Naive thymus-derived CD4-positive, alpha-beta T cell (primary cell): ENCODE measurements at regions of chr20 and their contacts with region 1.

Region 1: DNA sequence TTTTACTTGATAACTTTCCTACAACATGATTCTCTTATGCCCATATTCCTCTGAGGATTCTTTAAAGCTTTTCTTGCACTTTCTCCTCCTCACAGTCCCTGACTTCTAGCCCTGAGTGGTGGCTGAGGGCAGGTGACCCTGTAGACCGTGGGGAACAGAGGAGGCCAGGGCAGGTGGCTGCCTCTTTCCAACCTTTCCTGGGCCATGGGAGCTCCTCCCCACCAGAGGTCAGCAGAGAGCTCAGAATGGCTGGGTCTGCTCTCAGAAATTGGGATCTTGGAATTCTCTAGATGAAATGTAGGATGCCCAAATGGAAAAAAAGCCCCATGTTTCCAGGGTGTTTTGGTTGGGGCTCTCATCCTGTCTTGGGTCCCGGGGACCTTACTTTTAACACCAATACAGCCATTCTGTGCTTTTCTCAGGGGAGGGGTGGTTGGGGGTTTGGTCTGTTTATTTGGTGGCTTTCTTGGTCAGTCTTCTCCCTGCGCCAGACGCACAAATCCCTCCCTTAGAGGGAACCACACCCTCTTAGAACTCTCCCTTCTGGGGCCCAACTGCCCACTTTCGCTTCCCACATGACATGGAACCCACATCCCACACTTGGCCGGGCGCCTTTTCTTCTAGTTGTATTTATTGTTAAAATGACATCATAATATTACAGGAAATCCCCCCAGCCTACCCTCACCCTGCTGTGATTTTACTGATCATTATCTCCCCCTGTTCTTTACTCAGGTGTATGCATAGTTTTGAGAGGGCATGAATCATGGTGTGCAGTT is 17.9 kb downstream of the GNAS start:
- DNase-seq: peak in 6 of 9 donors; percentile 35 to 63 (median 52)
- ATAC-seq: peak; percentile 84
- H3K4me3 ChIP-seq: no peak overlapping the region
- H3K4me3 Mint-ChIP-seq: no peak overlapping the region
- H3K27ac ChIP-seq: no peak overlapping the region
- H3K27ac Mint-ChIP-seq: peak overlapping the region in 2 of 9 donors; percentile 28 to 62
- H3K4me1 ChIP-seq: no peaks in the 10 kb centered on the region
- H3K4me1 Mint-ChIP-seq: peaks cover 0 to 13% (median 3%) of the 10 kb centered on the region in 7 donors
- H3K27me3 ChIP-seq: peaks cover 0 to 3% of the 10 kb centered on the region in 2 donors
- H3K27me3 Mint-ChIP-seq: peaks cover 0 to 22% (median 0%) of the 10 kb centered on the region in 5 donors

Region 2: GRCh38 chr20:58888521-58889333 is 18.3 kb after region 1 on chr20:
- CTCF ChIA-PET with region 1: interaction called, 3 read pairs
- POLR2A ChIA-PET with region 1: interaction called, 3 read pairs
- intact Hi-C with region 1: loop called in 1 of 2 experiments (anchors 2 kb)
- DNase-seq: peak; percentile 64 to 91 (median 86)
- ATAC-seq: peak; percentile 76
- H3K4me3 ChIP-seq: peak overlapping the region; percentile 68
- H3K4me3 Mint-ChIP-seq: peak overlapping the region; percentile 81 to 94 (median 87)
- H3K27ac ChIP-seq: peak overlapping the region; percentile 95
- H3K27ac Mint-ChIP-seq: peak overlapping the region; percentile 67 to 97 (median 90)
- H3K4me1 ChIP-seq: peaks cover 4 to 6% of the 10 kb centered on the region in 2 donors
- H3K4me1 Mint-ChIP-seq: peaks cover 15 to 46% (median 37%) of the 10 kb centered on the region in 7 donors
- H3K27me3 ChIP-seq: no peaks in the 10 kb centered on the region
- H3K27me3 Mint-ChIP-seq: peaks cover 0 to 3% (median 0%) of the 10 kb centered on the region in 5 donors

Region 3: DNA sequence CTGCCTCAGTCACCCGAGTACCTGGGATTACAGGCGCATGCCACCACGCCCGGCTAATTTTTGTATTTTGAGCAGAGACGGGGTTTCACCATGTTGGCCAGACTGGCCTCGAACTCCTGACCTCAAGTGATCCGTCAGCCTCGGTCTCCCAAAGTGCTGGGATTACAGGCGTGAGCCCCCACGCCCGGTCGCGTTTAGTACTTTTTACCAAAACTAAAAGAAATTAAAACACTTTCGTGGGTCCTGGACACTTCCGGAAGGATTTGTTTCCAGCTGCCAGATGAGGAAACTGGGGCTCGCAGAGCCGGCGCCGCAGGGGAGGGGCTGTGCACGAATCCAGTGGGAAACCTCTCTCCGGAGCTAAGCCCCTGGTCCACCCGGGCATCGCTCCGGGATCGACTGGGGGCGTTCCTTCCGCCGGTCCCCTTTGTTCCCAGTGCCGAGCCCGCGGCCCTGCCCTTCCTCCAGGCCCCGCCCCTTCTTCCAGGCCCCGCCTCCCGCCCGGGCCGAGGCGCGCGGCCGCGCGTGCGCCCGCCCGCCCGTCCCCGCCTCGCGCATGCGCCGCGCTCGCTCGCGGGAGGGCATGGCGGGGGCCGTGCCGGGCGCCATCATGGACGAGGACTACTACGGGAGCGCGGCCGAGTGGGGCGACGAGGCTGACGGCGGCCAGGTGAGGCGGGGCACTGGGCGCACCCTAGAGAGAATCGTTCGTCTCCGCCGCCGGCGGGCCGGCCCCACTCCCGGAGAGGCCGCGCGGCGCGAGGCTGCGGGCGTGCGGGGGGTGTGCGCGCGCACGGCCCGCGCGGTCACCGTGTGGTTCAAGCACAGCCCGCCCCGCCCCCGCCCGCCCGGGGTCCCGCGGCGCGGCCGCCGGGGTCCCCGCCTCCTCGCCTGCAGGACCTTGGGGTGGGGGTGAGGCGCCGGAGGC is 110.5 kb after region 1 on chr20 and contains the start of gene NELFCD:
- CTCF ChIA-PET with region 1: interaction called, 3 read pairs
- POLR2A ChIA-PET with region 1: no interaction called
- intact Hi-C with region 1: loop called in 1 of 2 experiments (anchors 1 kb)
- DNase-seq: peak; percentile 78 to 96 (median 88)
- ATAC-seq: peak; percentile 97
- H3K4me3 ChIP-seq: peak within 1 kb of the TSS; percentile 91
- H3K4me3 Mint-ChIP-seq: peak within 1 kb of the TSS; percentile 86 to 97 (median 94)
- H3K27ac ChIP-seq: peak within 1 kb of the TSS; percentile 88
- H3K27ac Mint-ChIP-seq: peak within 1 kb of the TSS; percentile 77 to 98 (median 90)
- H3K4me1 ChIP-seq: peaks cover 24% of the 10 kb centered on the region in 2 donors
- H3K4me1 Mint-ChIP-seq: peaks cover 26 to 41% (median 32%) of the 10 kb centered on the region in 7 donors
- H3K27me3 ChIP-seq: no peaks in the 10 kb centered on the region
- H3K27me3 Mint-ChIP-seq: peaks cover 0 to 9% (median 0%) of the 10 kb centered on the region in 5 donors
- total RNA-seq, gene NELFCD: 84.5 to 96.1 (median 90.8) TPM

Region 4: GRCh38 chr20:59087829-59088433 is 217.5 kb after region 1 on chr20:
- CTCF ChIA-PET with region 1: interaction called, 4 read pairs
- POLR2A ChIA-PET with region 1: no interaction called
- intact Hi-C with region 1: loop called in 1 of 2 experiments (anchors 1 kb)
- DNase-seq: peak; percentile 67 to 85 (median 78)
- ATAC-seq: peak; percentile 92
- H3K4me3 ChIP-seq: no peak overlapping the region
- H3K4me3 Mint-ChIP-seq: no peak overlapping the region
- H3K27ac ChIP-seq: no peak overlapping the region
- H3K27ac Mint-ChIP-seq: peak overlapping the region in 4 of 9 donors; percentile 10 to 58 (median 40)
- H3K4me1 ChIP-seq: peaks cover 0 to 5% of the 10 kb centered on the region in 2 donors
- H3K4me1 Mint-ChIP-seq: peaks cover 0 to 7% (median 5%) of the 10 kb centered on the region in 7 donors
- H3K27me3 ChIP-seq: no peaks in the 10 kb centered on the region
- H3K27me3 Mint-ChIP-seq: peaks cover 0 to 32% (median 0%) of the 10 kb centered on the region in 5 donors

Region 5: GRCh38 chr20:59179988-59180387 is 309.6 kb after region 1 on chr20:
- CTCF ChIA-PET with region 1: no interaction called
- POLR2A ChIA-PET with region 1: no interaction called
- intact Hi-C with region 1: no loop called
- DNase-seq: no peak
- ATAC-seq: no peak
- H3K4me3 ChIP-seq: no peak overlapping the region
- H3K4me3 Mint-ChIP-seq: no peak overlapping the region
- H3K27ac ChIP-seq: no peak overlapping the region
- H3K27ac Mint-ChIP-seq: peak overlapping the region in 5 of 9 donors; percentile 12 to 90 (median 38)
- H3K4me1 ChIP-seq: peaks cover 55 to 74% of the 10 kb centered on the region in 2 donors
- H3K4me1 Mint-ChIP-seq: peaks cover 39 to 94% (median 86%) of the 10 kb centered on the region in 7 donors
- H3K27me3 ChIP-seq: no peaks in the 10 kb centered on the region
- H3K27me3 Mint-ChIP-seq: no peaks in the 10 kb centered on the region

Region 6: DNA sequence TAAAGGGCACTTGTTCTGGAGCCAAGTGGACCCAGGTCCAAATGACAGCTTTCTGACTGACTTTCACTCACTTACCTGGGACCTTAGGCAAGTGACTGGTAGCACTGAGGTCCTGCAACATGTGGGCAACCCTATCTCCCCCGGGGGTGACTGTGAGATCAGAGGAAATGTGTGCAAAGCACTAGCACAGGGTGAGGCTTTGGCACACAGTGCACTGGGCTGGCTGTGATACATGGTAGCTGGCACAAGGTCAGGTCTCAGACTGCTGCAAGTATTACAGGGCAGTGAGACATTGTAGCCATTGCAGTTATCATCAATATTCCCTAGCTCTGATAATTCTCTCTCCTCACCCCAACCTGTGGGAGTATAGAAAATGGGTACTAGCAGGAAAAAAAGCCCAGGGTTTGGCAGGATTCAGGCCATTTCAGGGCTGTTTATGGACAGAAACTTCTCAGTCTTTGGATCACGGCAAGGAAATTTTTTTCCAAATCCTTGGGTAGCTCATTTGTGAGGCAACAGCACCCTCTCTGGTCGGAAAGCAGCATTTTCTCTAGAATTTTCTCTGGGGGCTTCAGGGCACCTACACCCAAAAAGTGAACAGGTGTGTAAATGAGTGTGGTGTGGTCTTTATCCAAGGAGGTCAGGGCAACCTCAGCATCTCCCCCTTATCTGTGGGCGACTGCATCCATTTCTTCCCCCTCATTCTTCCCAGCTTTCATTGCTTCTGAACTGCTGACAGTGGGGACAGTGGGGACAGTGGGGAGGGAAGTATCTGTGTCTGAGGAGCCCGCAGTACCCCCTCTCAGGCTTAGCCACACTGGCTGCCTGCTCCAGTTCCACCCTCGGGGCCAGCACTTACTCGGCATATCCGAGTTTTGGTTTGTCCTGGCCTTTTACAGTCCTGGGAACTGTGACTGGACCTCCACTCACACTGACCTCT is 585.2 kb after region 1 on chr20:
- CTCF ChIA-PET with region 1: interaction called, 3 read pairs
- POLR2A ChIA-PET with region 1: no interaction called
- intact Hi-C with region 1: loop called in 1 of 2 experiments (anchors 1 kb)
- DNase-seq: peak in 2 of 9 donors; percentile 5 to 12
- ATAC-seq: no peak
- H3K4me3 ChIP-seq: no peak overlapping the region
- H3K4me3 Mint-ChIP-seq: no peak overlapping the region
- H3K27ac ChIP-seq: no peak overlapping the region
- H3K27ac Mint-ChIP-seq: no peak overlapping the region
- H3K4me1 ChIP-seq: no peaks in the 10 kb centered on the region
- H3K4me1 Mint-ChIP-seq: no peaks in the 10 kb centered on the region
- H3K27me3 ChIP-seq: no peaks in the 10 kb centered on the region
- H3K27me3 Mint-ChIP-seq: peaks cover 0 to 20% (median 9%) of the 10 kb centered on the region in 5 donors